CD8-positive, alpha-beta memory T cell (primary cell): ENCODE measurements at regions of chr2 and their contacts with region 1.

Region 1: GRCh38 chr2:68734688-68735525 is at the start of gene ARHGAP25:
- DNase-seq: peak in 3 of 5 donors; percentile 58 to 67 (median 60)
- H3K4me3 ChIP-seq: peak within 1 kb of the TSS; percentile 73
- H3K4me3 Mint-ChIP-seq: no peak within 1 kb of the TSS
- H3K27ac ChIP-seq: peak within 1 kb of the TSS; percentile 62
- H3K27ac Mint-ChIP-seq: no peak within 1 kb of the TSS
- H3K4me1 ChIP-seq: peaks cover 44% of the 10 kb centered on the region
- H3K4me1 Mint-ChIP-seq: peaks cover 30 to 46% (median 42%) of the 10 kb centered on the region in 3 donors
- H3K27me3 ChIP-seq: no peaks in the 10 kb centered on the region
- H3K27me3 Mint-ChIP-seq: no peaks in the 10 kb centered on the region
- total RNA-seq, gene ARHGAP25: 74.7 to 75.2 TPM

Region 2: DNA sequence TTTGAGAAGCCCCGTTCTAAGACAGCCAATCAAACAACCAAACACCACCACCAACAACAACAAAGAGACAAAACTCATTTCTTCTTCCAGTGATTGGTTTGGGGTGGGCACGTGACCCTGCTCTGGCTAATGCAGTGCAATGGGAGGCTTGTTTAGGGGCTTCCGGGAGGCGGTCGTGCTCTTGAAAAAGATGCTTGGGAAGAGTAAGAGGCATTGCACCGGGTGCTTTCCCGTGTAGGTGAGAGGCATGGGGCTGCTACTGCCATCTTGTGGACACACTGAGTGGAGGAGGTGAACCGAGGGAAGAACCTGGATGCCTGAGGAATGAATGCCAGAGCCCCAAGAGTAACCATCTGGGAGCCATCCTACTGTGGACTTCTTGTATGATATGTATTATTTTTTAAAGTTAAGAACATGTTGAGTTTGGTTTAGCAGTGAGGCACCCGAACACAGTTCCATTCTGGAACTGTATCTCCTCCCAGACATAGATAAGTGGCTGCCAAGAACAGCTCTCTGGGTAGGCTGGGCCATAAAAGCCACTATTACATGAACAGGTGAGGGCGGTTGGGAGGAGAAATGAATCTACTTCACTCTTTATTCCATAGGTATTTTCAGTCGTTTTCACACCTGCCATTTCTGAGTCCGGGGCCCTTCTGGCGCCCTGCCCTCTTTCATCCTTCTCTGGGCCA is 19.4 kb before region 1 on chr2:
- CTCF ChIA-PET with region 1: interaction called, 15 read pairs
- POLR2A ChIA-PET with region 1: interaction called, 10 read pairs
- DNase-seq: peak in 4 of 5 donors; percentile 38 to 67 (median 49)
- H3K4me3 ChIP-seq: peak overlapping the region; percentile 38
- H3K4me3 Mint-ChIP-seq: peak overlapping the region in 6 of 7 donors; percentile 8 to 75 (median 30)
- H3K27ac ChIP-seq: no peak overlapping the region
- H3K27ac Mint-ChIP-seq: peak overlapping the region in 7 of 8 donors; percentile 56 to 90 (median 79)
- H3K4me1 ChIP-seq: peaks cover 63% of the 10 kb centered on the region
- H3K4me1 Mint-ChIP-seq: peaks cover 63% of the 10 kb centered on the region in 3 donors
- H3K27me3 ChIP-seq: no peaks in the 10 kb centered on the region
- H3K27me3 Mint-ChIP-seq: peaks cover 0 to 3% of the 10 kb centered on the region in 2 donors

Region 3: DNA sequence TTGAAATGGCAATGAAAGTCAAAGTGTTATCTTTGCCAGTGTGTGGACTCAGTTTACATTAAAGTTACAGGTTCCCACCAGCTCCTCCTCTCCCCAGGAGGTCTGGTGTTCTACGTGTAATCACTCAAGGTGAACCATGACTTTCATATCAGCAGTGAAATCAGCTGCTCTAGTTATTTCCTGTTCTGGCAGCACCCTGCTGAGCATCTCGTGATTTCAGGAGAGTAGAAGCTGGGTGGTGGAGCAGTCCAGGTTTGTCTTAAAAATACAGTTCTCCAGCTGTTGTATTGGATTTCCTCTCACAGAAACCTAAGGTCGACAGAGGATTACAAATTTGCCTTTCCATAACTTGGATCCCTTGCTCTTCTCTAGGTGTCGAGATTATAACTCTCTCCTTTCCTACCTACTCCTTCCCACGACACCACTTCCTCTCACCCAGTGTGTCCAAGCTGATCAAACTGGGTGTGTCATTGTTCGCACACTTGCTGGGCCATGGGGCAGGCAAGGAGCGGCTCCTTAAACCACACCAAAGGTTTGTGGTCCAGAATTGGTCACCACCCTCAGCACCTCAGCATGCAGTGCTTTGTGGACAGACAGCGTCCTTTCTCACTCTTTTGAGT is 13.3 kb before region 1 on chr2:
- CTCF ChIA-PET with region 1: interaction called, 28 read pairs
- POLR2A ChIA-PET with region 1: interaction called, 10 read pairs
- DNase-seq: peak in 4 of 5 donors; percentile 20 to 69 (median 48)
- H3K4me3 ChIP-seq: peak overlapping the region; percentile 38
- H3K4me3 Mint-ChIP-seq: peak overlapping the region; percentile 42 to 86 (median 79)
- H3K27ac ChIP-seq: peak overlapping the region; percentile 43
- H3K27ac Mint-ChIP-seq: peak overlapping the region; percentile 83 to 99 (median 92)
- H3K4me1 ChIP-seq: peaks cover 82% of the 10 kb centered on the region
- H3K4me1 Mint-ChIP-seq: peaks cover 85 to 98% (median 96%) of the 10 kb centered on the region in 3 donors
- H3K27me3 ChIP-seq: no peaks in the 10 kb centered on the region
- H3K27me3 Mint-ChIP-seq: no peaks in the 10 kb centered on the region

Region 4: DNA sequence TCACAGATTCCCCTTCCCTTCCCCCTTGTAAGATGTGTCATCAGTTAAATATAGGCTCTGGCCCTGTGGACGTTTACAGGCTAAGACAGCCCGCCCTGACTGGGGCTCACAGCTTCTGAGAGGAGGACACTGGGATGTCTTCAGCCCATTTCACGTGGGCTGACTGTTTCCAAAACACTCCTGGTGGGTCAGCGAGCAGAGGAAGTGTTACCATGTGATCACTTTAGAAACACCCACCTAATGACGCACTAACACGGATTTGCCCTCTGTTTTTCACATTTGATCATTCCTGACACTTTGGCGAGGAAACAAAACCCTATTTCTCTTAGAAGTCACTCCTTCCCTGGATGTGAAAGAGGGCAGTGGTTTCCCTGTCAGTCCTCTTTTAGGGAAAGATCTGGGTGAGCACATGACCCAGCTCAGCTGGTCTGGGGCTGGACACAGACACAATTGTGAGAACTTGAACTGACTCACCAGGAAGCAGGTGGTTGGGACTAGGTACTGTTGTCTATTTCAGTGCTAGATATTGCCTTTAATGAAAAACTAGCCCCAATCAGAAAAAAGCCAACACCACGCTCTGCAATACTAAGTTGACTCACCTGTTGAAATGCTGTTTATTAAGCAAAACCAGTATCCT is 97.4 kb after region 1 on chr2:
- CTCF ChIA-PET with region 1: no interaction called
- POLR2A ChIA-PET with region 1: no interaction called
- DNase-seq: peak; percentile 9 to 62 (median 18)
- H3K4me3 ChIP-seq: no peak overlapping the region
- H3K4me3 Mint-ChIP-seq: peak overlapping the region; percentile 7 to 72 (median 57)
- H3K27ac ChIP-seq: peak overlapping the region; percentile 14
- H3K27ac Mint-ChIP-seq: peak overlapping the region in 7 of 8 donors; percentile 71 to 90 (median 83)
- H3K4me1 ChIP-seq: peaks cover 60% of the 10 kb centered on the region
- H3K4me1 Mint-ChIP-seq: peaks cover 49 to 72% (median 57%) of the 10 kb centered on the region in 3 donors
- H3K27me3 ChIP-seq: no peaks in the 10 kb centered on the region
- H3K27me3 Mint-ChIP-seq: peaks cover 0 to 2% of the 10 kb centered on the region in 2 donors

Region 5: GRCh38 chr2:69149631-69150215 is 414.8 kb after region 1 on chr2:
- CTCF ChIA-PET with region 1: no interaction called
- POLR2A ChIA-PET with region 1: no interaction called
- DNase-seq: no peak
- H3K4me3 ChIP-seq: no peak overlapping the region
- H3K4me3 Mint-ChIP-seq: no peak overlapping the region
- H3K27ac ChIP-seq: no peak overlapping the region
- H3K27ac Mint-ChIP-seq: no peak overlapping the region
- H3K4me1 ChIP-seq: no peaks in the 10 kb centered on the region
- H3K4me1 Mint-ChIP-seq: no peaks in the 10 kb centered on the region
- H3K27me3 ChIP-seq: no peaks in the 10 kb centered on the region
- H3K27me3 Mint-ChIP-seq: peaks cover 6 to 23% of the 10 kb centered on the region in 2 donors